ENCODE measurements at regions of chr3 and their contacts with region 1.

Region 1: DNA sequence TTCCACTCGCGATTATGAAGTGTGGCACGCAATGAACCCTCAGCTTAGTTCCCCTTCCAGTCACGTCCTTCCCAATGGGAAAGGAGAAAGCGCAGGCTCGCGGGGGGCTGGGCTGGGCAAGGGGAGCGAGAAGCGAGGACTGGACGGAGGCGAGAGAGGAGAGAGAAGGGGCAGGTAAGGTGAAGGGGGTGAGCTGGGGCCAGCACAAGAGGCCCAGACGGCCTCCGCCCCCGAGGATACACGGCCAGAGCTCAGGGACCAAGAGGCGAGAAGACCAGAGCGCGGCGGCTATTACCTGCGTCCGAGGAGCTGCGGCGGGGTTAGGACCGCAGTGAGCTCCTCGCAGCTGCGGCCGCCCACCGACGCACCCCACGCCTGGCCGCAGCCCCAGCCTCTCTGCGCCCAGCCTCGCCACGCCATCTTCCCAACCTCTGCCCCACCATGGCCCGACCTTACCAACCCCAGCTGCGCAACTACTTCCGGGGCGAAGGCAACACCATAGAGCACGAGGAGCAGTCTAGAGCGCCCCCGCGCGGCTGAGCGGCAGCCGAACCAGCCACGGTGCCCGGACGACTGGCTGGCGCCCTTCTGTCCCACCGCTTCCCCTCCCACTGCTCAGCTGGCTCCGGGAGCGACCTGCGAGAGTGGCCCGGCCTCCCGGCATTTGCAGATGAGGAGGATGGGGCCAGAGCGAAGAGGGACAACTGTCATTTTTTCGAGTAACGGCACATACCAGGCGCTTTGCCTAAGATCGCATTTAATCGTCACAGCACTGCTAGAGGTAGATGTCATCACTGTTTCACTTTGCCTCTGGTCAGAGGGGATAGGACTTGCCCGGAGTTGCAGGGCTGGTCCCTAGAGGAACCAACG is at the start of gene PARL:
- DNase-seq: peak; percentile 93 to 98 (median 96)
- ATAC-seq: peak; percentile 100
- H3K4me3 ChIP-seq: peak within 1 kb of the TSS; percentile 84 to 88
- H3K4me3 Mint-ChIP-seq: peak within 1 kb of the TSS; percentile 97
- H3K27ac ChIP-seq: peak within 1 kb of the TSS; percentile 61 to 70
- H3K27ac Mint-ChIP-seq: peak within 1 kb of the TSS; percentile 95
- H3K4me1 ChIP-seq: peaks cover 24% of the 10 kb centered on the region
- H3K4me1 Mint-ChIP-seq: peaks cover 42% of the 10 kb centered on the region
- H3K27me3 ChIP-seq: no peaks in the 10 kb centered on the region
- H3K27me3 Mint-ChIP-seq: no peaks in the 10 kb centered on the region
- CTCF ChIP-seq: peak; percentile 89
- total RNA-seq, gene PARL: 43.8 to 47.0 TPM

Region 2: DNA sequence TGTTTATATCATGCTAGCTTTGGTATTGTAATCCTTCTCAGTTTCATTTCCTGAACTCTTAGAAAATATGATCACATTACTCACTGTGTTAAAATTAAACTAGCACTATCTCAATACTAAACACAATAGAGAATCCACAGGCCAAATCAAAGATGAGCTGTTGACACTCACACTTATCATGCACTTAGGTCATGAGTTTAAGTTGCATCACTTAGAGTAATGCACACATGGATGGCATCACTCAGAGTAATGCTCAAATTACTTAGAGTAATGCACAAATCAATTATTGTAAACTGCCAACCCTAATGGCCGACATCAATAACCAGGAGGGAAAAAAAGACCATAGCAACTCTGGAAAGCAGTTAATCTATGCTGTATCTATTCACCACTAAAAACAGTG is 416.2 kb before region 1 on chr3:
- CTCF ChIA-PET with region 1: interaction called, 4 read pairs
- POLR2A ChIA-PET with region 1: no interaction called
- intact Hi-C with region 1: loop called (anchors 1 to 2 kb)
- DNase-seq: no peak
- ATAC-seq: no peak
- H3K4me3 ChIP-seq: no peak overlapping the region
- H3K4me3 Mint-ChIP-seq: no peak overlapping the region
- H3K27ac ChIP-seq: no peak overlapping the region
- H3K27ac Mint-ChIP-seq: no peak overlapping the region
- H3K4me1 ChIP-seq: peaks cover 3% of the 10 kb centered on the region
- H3K4me1 Mint-ChIP-seq: peaks cover 5% of the 10 kb centered on the region
- H3K27me3 ChIP-seq: no peaks in the 10 kb centered on the region
- H3K27me3 Mint-ChIP-seq: peaks cover 2% of the 10 kb centered on the region
- CTCF ChIP-seq: no peak

Region 3: GRCh38 chr3:183825456-183826161 is 59.1 kb before region 1 on chr3 and contains the start of gene MAP6D1:
- CTCF ChIA-PET with region 1: interaction called, 12 read pairs
- POLR2A ChIA-PET with region 1: interaction called, 3 read pairs
- intact Hi-C with region 1: loop called in 1 of 2 experiments (anchors 5 kb)
- DNase-seq: peak in 8 of 9 experiments; percentile 14 to 75 (median 54)
- ATAC-seq: peak; percentile 84
- H3K4me3 ChIP-seq: peak within 1 kb of the TSS; percentile 45 to 55
- H3K4me3 Mint-ChIP-seq: peak within 1 kb of the TSS; percentile 82
- H3K27ac ChIP-seq: peak within 1 kb of the TSS in 1 of 2 experiments; percentile 23
- H3K27ac Mint-ChIP-seq: peak within 1 kb of the TSS; percentile 30
- H3K4me1 ChIP-seq: peaks cover 10% of the 10 kb centered on the region
- H3K4me1 Mint-ChIP-seq: peaks cover 13% of the 10 kb centered on the region
- H3K27me3 ChIP-seq: no peaks in the 10 kb centered on the region
- H3K27me3 Mint-ChIP-seq: no peaks in the 10 kb centered on the region
- CTCF ChIP-seq: no peak
- total RNA-seq, gene MAP6D1: 1.5 TPM in 1 of 2 experiments, not detected in the other

Region 4: GRCh38 chr3:183954875-183955274 is 70.2 kb after region 1 on chr3:
- CTCF ChIA-PET with region 1: no interaction called
- POLR2A ChIA-PET with region 1: no interaction called
- intact Hi-C with region 1: no loop called
- DNase-seq: no peak
- ATAC-seq: no peak
- H3K4me3 ChIP-seq: no peak overlapping the region
- H3K4me3 Mint-ChIP-seq: no peak overlapping the region
- H3K27ac ChIP-seq: no peak overlapping the region
- H3K27ac Mint-ChIP-seq: no peak overlapping the region
- H3K4me1 ChIP-seq: no peaks in the 10 kb centered on the region
- H3K4me1 Mint-ChIP-seq: no peaks in the 10 kb centered on the region
- H3K27me3 ChIP-seq: no peaks in the 10 kb centered on the region
- H3K27me3 Mint-ChIP-seq: no peaks in the 10 kb centered on the region
- CTCF ChIP-seq: no peak

Region 5: DNA sequence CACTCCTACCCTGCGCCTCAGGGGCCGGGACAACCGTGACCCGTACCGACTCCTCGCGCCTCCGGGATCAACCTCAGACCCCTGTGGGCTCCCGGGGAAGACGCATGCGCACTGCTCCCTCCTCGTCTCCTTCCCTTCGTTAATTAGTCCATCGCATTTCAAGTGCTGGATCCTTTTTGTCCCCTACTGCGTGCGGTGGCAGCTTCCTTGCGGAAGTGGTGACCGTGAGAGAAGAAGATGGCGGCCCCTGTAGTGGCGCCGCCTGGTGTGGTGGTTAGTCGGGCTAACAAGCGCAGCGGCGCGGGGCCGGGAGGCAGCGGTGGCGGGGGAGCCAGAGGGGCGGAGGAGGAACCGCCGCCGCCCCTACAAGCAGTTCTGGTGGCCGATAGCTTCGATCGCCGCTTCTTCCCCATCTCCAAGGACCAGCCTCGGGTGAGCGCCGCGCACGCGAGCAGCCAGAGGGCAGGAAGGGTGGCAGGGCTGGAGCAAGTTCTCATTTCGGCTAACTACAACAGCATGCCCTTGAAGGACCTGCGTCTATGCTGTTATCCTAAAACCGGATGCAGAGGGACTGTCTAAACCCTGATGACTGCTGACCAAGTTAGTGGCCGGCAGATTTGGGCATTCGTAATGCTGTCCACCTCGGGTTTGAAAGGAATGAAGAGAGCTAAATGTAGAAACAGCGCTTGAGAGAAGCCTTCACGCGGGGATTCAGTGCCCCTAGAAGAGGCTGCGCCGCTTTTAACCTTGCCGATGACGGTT is 250.7 kb after region 1 on chr3 and contains the start of gene EIF2B5:
- CTCF ChIA-PET with region 1: no interaction called
- POLR2A ChIA-PET with region 1: no interaction called
- intact Hi-C with region 1: loop called in 1 of 2 experiments (anchors 1 kb)
- DNase-seq: peak; percentile 67 to 95 (median 87)
- ATAC-seq: peak; percentile 89
- H3K4me3 ChIP-seq: peak within 1 kb of the TSS; percentile 79 to 91
- H3K4me3 Mint-ChIP-seq: peak within 1 kb of the TSS; percentile 100
- H3K27ac ChIP-seq: peak within 1 kb of the TSS; percentile 76 to 83
- H3K27ac Mint-ChIP-seq: peak within 1 kb of the TSS; percentile 98
- H3K4me1 ChIP-seq: peaks cover 25% of the 10 kb centered on the region
- H3K4me1 Mint-ChIP-seq: peaks cover 41% of the 10 kb centered on the region
- H3K27me3 ChIP-seq: no peaks in the 10 kb centered on the region
- H3K27me3 Mint-ChIP-seq: no peaks in the 10 kb centered on the region
- CTCF ChIP-seq: no peak
- total RNA-seq, gene EIF2B5: 52.6 to 61.9 TPM

Region 6: DNA sequence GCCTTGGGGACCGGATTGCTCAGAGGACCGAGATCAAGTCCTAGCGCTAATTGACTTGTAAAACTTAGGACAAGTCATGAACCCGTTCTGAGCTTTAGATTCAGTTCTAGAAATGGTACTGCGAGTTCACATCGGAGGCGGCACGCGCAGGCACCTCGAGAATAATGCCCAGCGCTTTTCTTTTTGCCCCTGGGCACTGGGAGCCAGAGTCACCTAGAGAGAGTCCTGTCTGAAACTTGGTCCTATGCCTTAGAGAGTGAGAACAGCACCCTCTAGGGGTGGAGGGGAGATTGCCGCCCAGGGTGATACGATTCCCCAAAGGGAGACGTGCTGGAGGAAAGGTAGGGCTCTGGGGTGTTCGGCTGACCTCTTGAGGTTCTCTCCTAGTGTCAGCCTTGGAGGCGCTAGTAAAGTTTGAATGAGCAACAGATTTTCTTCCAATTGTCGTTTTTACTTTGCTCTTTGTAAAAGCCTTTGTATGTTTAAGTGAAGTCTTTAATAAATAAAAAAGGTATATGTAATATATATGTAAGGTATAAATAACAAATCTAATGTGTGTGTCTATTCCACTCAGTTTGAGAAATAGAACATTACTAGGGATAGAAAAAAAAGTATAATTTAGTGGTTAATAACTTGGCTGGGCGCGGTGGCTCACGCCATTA is 365.6 kb after region 1 on chr3:
- CTCF ChIA-PET with region 1: no interaction called
- POLR2A ChIA-PET with region 1: no interaction called
- intact Hi-C with region 1: loop called (anchors 1 to 2 kb)
- DNase-seq: peak; percentile 78 to 92 (median 89)
- ATAC-seq: peak; percentile 57
- H3K4me3 ChIP-seq: peak overlapping the region; percentile 98 to 99
- H3K4me3 Mint-ChIP-seq: peak overlapping the region; percentile 93
- H3K27ac ChIP-seq: peak overlapping the region; percentile 28 to 81
- H3K27ac Mint-ChIP-seq: peak overlapping the region; percentile 90
- H3K4me1 ChIP-seq: peaks cover 10% of the 10 kb centered on the region
- H3K4me1 Mint-ChIP-seq: peaks cover 10% of the 10 kb centered on the region
- H3K27me3 ChIP-seq: no peaks in the 10 kb centered on the region
- H3K27me3 Mint-ChIP-seq: no peaks in the 10 kb centered on the region
- CTCF ChIP-seq: peak; percentile 85

Region 7: GRCh38 chr3:184525337-184526087 is 640.9 kb after region 1 on chr3:
- CTCF ChIA-PET with region 1: no interaction called
- POLR2A ChIA-PET with region 1: no interaction called
- intact Hi-C with region 1: no loop called
- DNase-seq: peak in 3 of 9 experiments; percentile 24 to 53 (median 29)
- ATAC-seq: peak; percentile 62
- H3K4me3 ChIP-seq: peak overlapping the region; percentile 50 to 54
- H3K4me3 Mint-ChIP-seq: peak overlapping the region; percentile 88
- H3K27ac ChIP-seq: peak overlapping the region in 1 of 2 experiments; percentile 24
- H3K27ac Mint-ChIP-seq: peak overlapping the region; percentile 66
- H3K4me1 ChIP-seq: peaks cover 13% of the 10 kb centered on the region
- H3K4me1 Mint-ChIP-seq: peaks cover 14% of the 10 kb centered on the region
- H3K27me3 ChIP-seq: peaks cover 0 to 12% of the 10 kb centered on the region in 2 experiments
- H3K27me3 Mint-ChIP-seq: peaks cover 30% of the 10 kb centered on the region
- CTCF ChIP-seq: no peak

Region 8: DNA sequence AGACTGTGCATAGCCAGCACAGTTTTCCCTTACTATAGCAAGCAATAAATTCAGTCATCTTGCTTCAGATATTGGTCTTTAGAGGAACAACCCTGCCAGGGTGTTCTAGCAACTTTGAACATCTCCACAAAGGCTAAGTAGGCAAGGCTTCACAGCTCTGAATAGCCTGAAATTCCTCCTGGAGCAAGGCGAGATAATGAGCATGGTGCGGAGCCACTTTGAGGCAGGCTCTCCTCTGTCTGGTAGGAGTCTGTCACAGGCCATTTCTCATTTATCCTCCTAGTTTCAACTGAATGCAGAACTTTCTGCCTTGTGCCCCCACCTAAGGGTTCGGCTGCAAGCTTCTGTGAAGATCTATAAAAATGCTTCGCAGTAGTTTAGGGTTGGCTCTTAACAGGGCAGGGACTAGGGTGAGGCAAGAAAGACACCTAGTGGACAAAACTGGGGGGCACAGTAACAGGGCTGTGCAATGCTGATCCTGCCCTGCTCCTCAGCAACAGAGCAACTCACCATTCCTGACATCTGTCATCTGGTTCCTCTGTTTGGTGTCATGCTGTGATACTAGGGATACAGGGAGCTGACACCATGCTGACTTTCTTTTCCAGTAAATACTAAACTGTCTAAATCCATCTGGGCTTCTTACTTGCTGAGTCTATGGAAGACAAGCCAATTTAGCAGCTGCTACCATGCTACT is 1385.7 kb after region 1 on chr3:
- CTCF ChIA-PET with region 1: no interaction called
- POLR2A ChIA-PET with region 1: no interaction called
- intact Hi-C with region 1: loop called in 1 of 2 experiments (anchors 10 kb)
- DNase-seq: peak in 1 of 9 experiments; percentile 10
- ATAC-seq: no peak
- H3K4me3 ChIP-seq: no peak overlapping the region
- H3K4me3 Mint-ChIP-seq: no peak overlapping the region
- H3K27ac ChIP-seq: no peak overlapping the region
- H3K27ac Mint-ChIP-seq: no peak overlapping the region
- H3K4me1 ChIP-seq: no peaks in the 10 kb centered on the region
- H3K4me1 Mint-ChIP-seq: no peaks in the 10 kb centered on the region
- H3K27me3 ChIP-seq: peaks cover 0 to 5% of the 10 kb centered on the region in 2 experiments
- H3K27me3 Mint-ChIP-seq: peaks cover 35% of the 10 kb centered on the region
- CTCF ChIP-seq: peak; percentile 16

Measured in CD8-positive, alpha-beta T cell (primary cell).